CD8-positive, alpha-beta T cell (primary cell): ENCODE measurements at regions of chrX and their contacts with region 1.

Region 1: GRCh38 chrX:102768987-102769761 is 48.6 kb downstream of the GPRASP3 start:
- DNase-seq: peak; percentile 57 to 90 (median 79)
- ATAC-seq: peak; percentile 83
- H3K4me3 ChIP-seq: peak overlapping the region; percentile 74 to 92
- H3K4me3 Mint-ChIP-seq: peak overlapping the region; percentile 98
- H3K27ac ChIP-seq: peak overlapping the region; percentile 59 to 83
- H3K27ac Mint-ChIP-seq: peak overlapping the region; percentile 97
- H3K4me1 ChIP-seq: no peaks in the 10 kb centered on the region
- H3K4me1 Mint-ChIP-seq: peaks cover 17% of the 10 kb centered on the region
- H3K27me3 ChIP-seq: no peaks in the 10 kb centered on the region
- H3K27me3 Mint-ChIP-seq: no peaks in the 10 kb centered on the region
- CTCF ChIP-seq: no peak

Region 2: DNA sequence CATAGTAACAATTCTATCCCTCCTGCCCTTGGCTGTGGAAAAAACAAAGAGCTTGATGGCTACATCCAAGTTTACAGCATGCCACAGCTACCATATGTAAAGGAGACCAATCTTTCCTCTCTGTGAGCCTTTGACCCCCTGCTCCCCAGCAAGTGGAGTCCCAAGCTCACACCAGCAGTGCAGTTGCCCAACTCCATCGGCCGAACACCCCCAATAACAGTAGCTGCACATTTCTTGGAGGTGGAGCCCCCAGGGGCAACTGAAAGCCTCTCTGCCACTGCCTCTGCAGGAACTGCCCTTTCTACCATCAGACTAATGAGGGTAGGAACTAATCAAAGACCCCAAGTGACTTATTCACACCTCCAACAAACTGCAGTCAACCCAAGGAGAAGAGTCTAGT is 724.7 kb before region 1 on chrX:
- CTCF ChIA-PET with region 1: no interaction called
- POLR2A ChIA-PET with region 1: no interaction called
- intact Hi-C with region 1: no loop called
- DNase-seq: no peak
- ATAC-seq: no peak
- H3K4me3 ChIP-seq: no peak overlapping the region
- H3K4me3 Mint-ChIP-seq: no peak overlapping the region
- H3K27ac ChIP-seq: no peak overlapping the region
- H3K27ac Mint-ChIP-seq: no peak overlapping the region
- H3K4me1 ChIP-seq: no peaks in the 10 kb centered on the region
- H3K4me1 Mint-ChIP-seq: no peaks in the 10 kb centered on the region
- H3K27me3 ChIP-seq: no peaks in the 10 kb centered on the region
- H3K27me3 Mint-ChIP-seq: no peaks in the 10 kb centered on the region
- CTCF ChIP-seq: no peak

Region 3: DNA sequence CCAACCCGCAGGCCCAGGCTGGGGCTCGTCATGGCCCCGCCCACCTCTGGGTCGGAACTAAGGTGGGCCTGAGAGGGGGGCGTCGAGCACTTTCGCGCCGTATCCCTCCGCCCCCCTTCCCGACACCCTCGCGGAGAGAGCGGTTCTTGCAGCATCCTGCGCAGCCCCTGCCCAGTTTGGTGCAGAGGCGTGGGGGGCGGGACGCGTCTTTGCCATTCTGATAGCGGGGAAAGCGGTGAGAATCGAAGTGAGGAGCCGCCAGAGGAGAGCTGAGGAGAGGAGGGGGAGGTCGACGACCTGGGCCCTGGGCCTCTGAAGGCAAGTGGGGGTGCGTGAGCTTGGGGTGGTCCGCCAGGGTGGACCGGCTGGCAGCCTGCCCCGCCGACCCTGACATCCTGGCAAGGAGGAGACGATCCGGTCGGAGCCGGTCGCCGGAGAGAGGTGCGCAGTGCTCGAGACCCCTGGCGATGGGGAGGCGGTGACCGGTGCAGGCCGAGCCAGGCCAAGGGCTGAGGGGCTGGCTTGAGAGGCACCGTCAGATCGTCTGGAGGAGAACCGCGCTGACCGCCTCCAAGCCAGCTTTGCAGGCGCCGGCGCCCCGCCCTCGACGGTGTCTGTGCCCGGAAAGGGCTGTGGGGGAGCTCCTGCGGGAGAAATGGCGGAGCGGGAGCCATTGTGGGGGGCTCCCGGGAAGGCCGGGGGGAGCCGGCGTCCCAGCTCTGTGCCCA is 23.2 kb before region 1 on chrX:
- CTCF ChIA-PET with region 1: no interaction called
- POLR2A ChIA-PET with region 1: no interaction called
- intact Hi-C with region 1: loop called in 1 of 2 experiments (anchors 1 kb)
- DNase-seq: peak in 6 of 9 experiments; percentile 16 to 57 (median 26)
- ATAC-seq: peak; percentile 82
- H3K4me3 ChIP-seq: peak overlapping the region; percentile 50 to 53
- H3K4me3 Mint-ChIP-seq: peak overlapping the region; percentile 92
- H3K27ac ChIP-seq: no peak overlapping the region
- H3K27ac Mint-ChIP-seq: peak overlapping the region; percentile 52
- H3K4me1 ChIP-seq: no peaks in the 10 kb centered on the region
- H3K4me1 Mint-ChIP-seq: peaks cover 8% of the 10 kb centered on the region
- H3K27me3 ChIP-seq: no peaks in the 10 kb centered on the region
- H3K27me3 Mint-ChIP-seq: no peaks in the 10 kb centered on the region
- CTCF ChIP-seq: no peak

Region 4: GRCh38 chrX:102808336-102808735 is 39.2 kb after region 1 on chrX:
- CTCF ChIA-PET with region 1: no interaction called
- POLR2A ChIA-PET with region 1: no interaction called
- intact Hi-C with region 1: no loop called
- DNase-seq: no peak
- ATAC-seq: no peak
- H3K4me3 ChIP-seq: no peak overlapping the region
- H3K4me3 Mint-ChIP-seq: no peak overlapping the region
- H3K27ac ChIP-seq: no peak overlapping the region
- H3K27ac Mint-ChIP-seq: no peak overlapping the region
- H3K4me1 ChIP-seq: no peaks in the 10 kb centered on the region
- H3K4me1 Mint-ChIP-seq: no peaks in the 10 kb centered on the region
- H3K27me3 ChIP-seq: no peaks in the 10 kb centered on the region
- H3K27me3 Mint-ChIP-seq: no peaks in the 10 kb centered on the region
- CTCF ChIP-seq: no peak

Region 5: DNA sequence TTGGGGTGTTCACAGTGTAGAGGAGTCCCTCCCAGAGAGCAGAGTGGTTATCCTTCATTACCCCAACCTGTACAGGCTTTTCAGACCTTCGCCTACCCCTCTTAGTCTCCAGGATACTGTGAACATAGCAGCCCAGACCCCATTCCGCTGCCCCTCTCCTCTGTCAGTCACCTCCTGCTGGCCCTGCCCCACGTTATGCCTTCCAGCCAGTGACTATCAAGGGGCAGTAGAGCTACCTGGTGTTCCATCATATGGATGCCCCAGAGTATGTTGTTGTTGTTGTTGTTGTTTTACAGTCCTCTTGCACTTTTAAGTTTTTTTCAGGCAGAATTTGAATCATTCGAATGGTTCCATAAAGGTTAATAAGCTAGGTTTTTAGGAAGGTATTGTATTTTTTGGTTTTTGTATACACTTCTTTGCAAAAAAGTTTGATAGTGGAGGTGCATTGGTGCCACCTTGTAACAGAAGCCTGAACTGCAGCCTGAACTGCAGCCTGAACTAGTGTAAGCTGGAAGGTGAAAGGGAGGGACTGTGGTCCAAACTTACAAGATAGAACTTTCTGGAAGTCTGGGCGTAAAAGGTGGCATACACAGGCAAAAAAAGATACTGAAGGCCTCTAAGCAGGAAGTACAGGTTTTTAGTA is 66.5 kb after region 1 on chrX:
- CTCF ChIA-PET with region 1: no interaction called
- POLR2A ChIA-PET with region 1: no interaction called
- intact Hi-C with region 1: no loop called
- DNase-seq: peak in 3 of 9 experiments; percentile 10 to 12 (median 10)
- ATAC-seq: no peak
- H3K4me3 ChIP-seq: no peak overlapping the region
- H3K4me3 Mint-ChIP-seq: no peak overlapping the region
- H3K27ac ChIP-seq: no peak overlapping the region
- H3K27ac Mint-ChIP-seq: no peak overlapping the region
- H3K4me1 ChIP-seq: no peaks in the 10 kb centered on the region
- H3K4me1 Mint-ChIP-seq: no peaks in the 10 kb centered on the region
- H3K27me3 ChIP-seq: no peaks in the 10 kb centered on the region
- H3K27me3 Mint-ChIP-seq: no peaks in the 10 kb centered on the region
- CTCF ChIP-seq: peak; percentile 20